ENCODE measurements at regions of chr15 and their contacts with region 1.

Region 1: GRCh38 chr15:45037936-45038335 is 14.9 kb downstream of the SORD start:
- DNase-seq: no peak
- ATAC-seq: no peak
- H3K4me3 ChIP-seq: no peak overlapping the region
- H3K27ac ChIP-seq: no peak overlapping the region
- H3K4me1 ChIP-seq: no peaks in the 10 kb centered on the region; the same call in 1 of the 2 replicates
- H3K27me3 ChIP-seq: no peaks in the 10 kb centered on the region
- CTCF ChIP-seq: no peak

Region 2: GRCh38 chr15:44968475-44968874 is 69.5 kb before region 1 on chr15:
- CTCF ChIA-PET with region 1: no interaction called
- POLR2A ChIA-PET with region 1: no interaction called
- intact Hi-C with region 1: loop called (anchors 1 kb)
- DNase-seq: no peak
- ATAC-seq: no peak
- H3K4me3 ChIP-seq: no peak overlapping the region
- H3K27ac ChIP-seq: no peak overlapping the region
- H3K4me1 ChIP-seq: no peaks in the 10 kb centered on the region
- H3K27me3 ChIP-seq: 0 out of 2 replicates have a peak, but pooled peaks cover 5% of the 10 kb centered on the region
- CTCF ChIP-seq: no peak

Region 3: DNA sequence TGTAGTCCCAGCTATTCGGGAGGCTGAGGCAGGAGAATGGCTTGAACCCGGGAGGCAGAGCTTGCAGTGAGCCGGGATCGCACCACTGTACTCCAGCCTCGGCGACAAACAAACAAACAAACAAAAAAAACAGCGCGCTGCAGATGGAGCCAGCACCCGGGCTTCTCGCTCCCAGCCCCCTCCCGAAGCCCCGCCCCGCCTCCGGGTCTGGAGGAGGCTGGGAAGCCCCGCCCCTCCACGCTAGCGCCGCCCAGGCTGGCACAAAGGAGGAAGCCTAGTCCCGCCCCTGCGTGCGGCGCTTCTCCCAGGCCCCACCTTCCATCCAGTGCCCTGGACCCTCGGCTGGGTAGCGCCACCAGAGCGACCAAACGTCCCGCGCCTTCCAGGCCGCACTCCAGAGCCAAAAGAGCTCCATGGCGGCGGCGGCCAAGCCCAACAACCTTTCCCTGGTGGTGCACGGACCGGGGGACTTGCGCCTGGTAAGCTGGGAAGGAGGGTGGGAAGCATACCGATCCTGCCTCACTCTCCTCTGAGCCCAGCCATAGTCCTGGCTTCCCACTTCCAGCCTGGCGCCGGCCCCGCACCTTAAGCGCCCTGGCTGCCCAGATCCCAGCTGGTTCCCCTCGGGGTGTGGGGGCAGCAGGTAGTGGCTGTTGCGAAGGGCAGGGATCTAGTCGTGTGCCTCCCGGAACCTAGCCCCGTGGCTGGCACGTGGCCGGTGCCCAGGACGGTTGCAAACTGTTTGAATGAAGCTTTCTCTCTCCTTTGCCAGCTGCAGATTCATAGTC is 14.9 kb before region 1 on chr15 and contains the start of gene SORD:
- CTCF ChIA-PET with region 1: interaction called, 4 read pairs
- POLR2A ChIA-PET with region 1: no interaction called
- intact Hi-C with region 1: loop called (anchors 2 kb)
- DNase-seq: peak; percentile 91
- ATAC-seq: peak; percentile 97
- H3K4me3 ChIP-seq: peak within 1 kb of the TSS; percentile 74
- H3K27ac ChIP-seq: no peak within 1 kb of the TSS
- H3K4me1 ChIP-seq: peaks cover 14% of the 10 kb centered on the region
- H3K27me3 ChIP-seq: peaks cover 18% of the 10 kb centered on the region
- CTCF ChIP-seq: no peak
- total RNA-seq, gene SORD: 118 and 119 TPM in 2 replicates

Region 4: GRCh38 chr15:45118131-45118588 is 80.2 kb after region 1 on chr15:
- CTCF ChIA-PET with region 1: interaction called, 11 read pairs
- POLR2A ChIA-PET with region 1: no interaction called
- intact Hi-C with region 1: no loop called
- DNase-seq: peak; percentile 93
- ATAC-seq: peak; percentile 93
- H3K4me3 ChIP-seq: peak overlapping the region; percentile 34; the same call in 1 of the 2 replicates
- H3K27ac ChIP-seq: no peak overlapping the region
- H3K4me1 ChIP-seq: peaks cover 14% of the 10 kb centered on the region
- H3K27me3 ChIP-seq: peaks cover 10% of the 10 kb centered on the region
- CTCF ChIP-seq: peak; percentile 99

Region 5: GRCh38 chr15:45795440-45796069 is 757.6 kb after region 1 on chr15:
- CTCF ChIA-PET with region 1: no interaction called
- POLR2A ChIA-PET with region 1: no interaction called
- intact Hi-C with region 1: no loop called
- DNase-seq: peak; percentile 74
- ATAC-seq: peak; percentile 80
- H3K4me3 ChIP-seq: no peak overlapping the region
- H3K27ac ChIP-seq: no peak overlapping the region
- H3K4me1 ChIP-seq: no peaks in the 10 kb centered on the region; the same call in 1 of the 2 replicates
- H3K27me3 ChIP-seq: no peaks in the 10 kb centered on the region
- CTCF ChIP-seq: peak; percentile 78